Activated CD4-positive, alpha-beta memory T cell treated with anti-CD3 and anti-CD28 coated beads for 36 hours (primary cell): ENCODE measurements at regions of chr17 and their contacts with region 1.

Region 1: GRCh38 chr17:58517734-58518609 is 3.5 kb upstream of the MTMR4 start:
- DNase-seq: peak; percentile 100
- H3K4me3 Mint-ChIP-seq: peak overlapping the region; percentile 91
- H3K27ac Mint-ChIP-seq: peak overlapping the region; percentile 95
- H3K4me1 Mint-ChIP-seq: peaks cover 32% of the 10 kb centered on the region
- H3K27me3 Mint-ChIP-seq: no peaks in the 10 kb centered on the region

Region 2: GRCh38 chr17:58006924-58007780 is 510.8 kb before region 1 on chr17 and contains the start of gene SRSF1:
- CTCF ChIA-PET with region 1: no interaction called
- POLR2A ChIA-PET with region 1: no interaction called
- intact Hi-C with region 1: loop called (anchors 1 kb)
- DNase-seq: peak; percentile 99
- H3K4me3 Mint-ChIP-seq: peak within 1 kb of the TSS; percentile 99
- H3K27ac Mint-ChIP-seq: peak within 1 kb of the TSS; percentile 100
- H3K4me1 Mint-ChIP-seq: peaks cover 46% of the 10 kb centered on the region
- H3K27me3 Mint-ChIP-seq: no peaks in the 10 kb centered on the region
- total RNA-seq, gene SRSF1: 325 to 326 TPM

Region 3: DNA sequence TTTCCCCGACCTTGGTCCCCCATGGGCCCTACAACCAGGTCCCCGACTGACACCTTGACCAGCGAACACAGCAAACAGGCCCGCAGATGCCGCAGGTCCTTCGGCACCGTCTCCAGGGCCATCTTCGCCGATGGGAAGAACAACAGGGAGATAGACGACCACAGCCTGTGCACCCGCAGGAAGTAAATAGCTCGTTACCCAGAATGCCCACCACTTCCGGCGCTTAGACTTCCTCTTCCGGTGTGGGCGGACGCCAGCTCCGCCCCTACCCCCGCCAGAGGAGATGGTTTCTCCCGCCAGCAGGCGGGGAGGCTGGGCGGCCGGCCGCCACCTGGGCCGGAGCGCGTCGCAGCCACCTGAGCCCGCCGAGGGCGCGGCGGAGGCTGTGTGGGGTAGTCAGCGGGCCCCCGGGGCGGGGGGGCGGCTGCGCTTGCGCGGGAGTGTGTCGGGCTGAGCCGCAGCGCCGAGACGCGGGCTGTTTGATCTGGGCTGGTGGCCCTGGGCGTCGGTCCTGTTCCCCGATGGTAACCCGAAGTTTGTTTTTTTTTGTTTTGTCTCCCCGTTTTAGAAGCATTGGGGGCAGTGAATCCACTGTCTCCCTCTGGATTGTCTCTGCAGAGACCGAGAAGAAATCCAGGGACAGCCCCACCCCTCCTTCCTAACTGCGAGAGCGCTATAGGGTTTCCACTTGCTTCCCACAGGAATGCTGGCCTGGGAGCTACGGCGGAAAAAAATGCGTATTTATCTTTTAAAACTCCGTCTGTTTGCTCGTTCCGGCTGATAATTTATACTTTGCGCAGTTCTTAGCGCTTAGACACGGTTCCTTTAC is 165.7 kb before region 1 on chr17 and contains the start of gene SUPT4H1:
- CTCF ChIA-PET with region 1: no interaction called
- POLR2A ChIA-PET with region 1: interaction called, 4 read pairs
- intact Hi-C with region 1: loop called (anchors 2 kb)
- DNase-seq: peak; percentile 96
- H3K4me3 Mint-ChIP-seq: peak within 1 kb of the TSS; percentile 100
- H3K27ac Mint-ChIP-seq: peak within 1 kb of the TSS; percentile 99
- H3K4me1 Mint-ChIP-seq: peaks cover 50% of the 10 kb centered on the region
- H3K27me3 Mint-ChIP-seq: no peaks in the 10 kb centered on the region
- total RNA-seq, gene SUPT4H1: 113 to 114 TPM

Region 4: DNA sequence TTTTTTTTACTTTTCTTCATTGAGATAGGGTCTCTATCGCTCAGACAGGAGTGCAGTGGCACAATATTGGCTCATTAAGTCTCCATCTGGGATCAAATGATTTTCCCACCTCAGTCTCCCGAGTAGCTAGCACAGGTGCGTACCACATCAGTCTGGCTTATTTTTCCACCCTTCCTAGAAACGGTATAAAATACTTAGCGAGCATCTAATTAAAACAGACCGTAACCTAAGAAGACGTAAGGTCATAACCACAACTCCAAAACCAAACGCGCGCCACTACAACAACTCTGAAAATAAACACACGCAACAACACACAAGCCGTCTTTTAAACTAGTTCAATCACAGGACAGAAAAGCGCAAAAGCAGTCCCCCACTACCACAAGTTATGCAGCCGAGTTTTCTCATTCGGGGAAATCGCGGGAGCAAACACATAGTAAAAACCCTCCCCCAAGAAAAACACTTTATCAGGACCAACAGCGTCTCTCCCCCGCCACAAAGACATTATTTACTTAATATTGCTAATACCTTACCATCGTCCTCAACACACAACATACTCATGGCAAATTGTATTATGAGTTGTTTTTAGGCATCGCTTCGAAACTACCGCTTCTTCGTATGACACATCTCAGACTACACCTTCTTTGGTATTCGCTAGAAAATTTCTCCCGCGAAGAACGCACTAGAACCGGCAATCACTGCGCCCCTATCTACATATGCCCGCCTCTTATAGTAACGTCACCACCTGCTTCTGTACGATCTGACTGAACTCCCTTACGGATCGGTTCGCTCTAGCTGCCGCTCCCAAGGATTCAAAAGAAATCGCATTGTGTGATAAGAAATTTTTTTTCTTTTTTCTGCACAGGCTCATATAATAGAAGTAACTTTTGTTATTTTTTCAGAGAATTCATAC is 141.1 kb after region 1 on chr17:
- CTCF ChIA-PET with region 1: interaction called, 4 read pairs
- POLR2A ChIA-PET with region 1: interaction called, 4 read pairs
- intact Hi-C with region 1: loop called (anchors 1 kb)
- DNase-seq: peak; percentile 86
- H3K4me3 Mint-ChIP-seq: peak overlapping the region; percentile 77
- H3K27ac Mint-ChIP-seq: peak overlapping the region; percentile 97
- H3K4me1 Mint-ChIP-seq: peaks cover 18% of the 10 kb centered on the region
- H3K27me3 Mint-ChIP-seq: peaks cover 5% of the 10 kb centered on the region

Region 5: DNA sequence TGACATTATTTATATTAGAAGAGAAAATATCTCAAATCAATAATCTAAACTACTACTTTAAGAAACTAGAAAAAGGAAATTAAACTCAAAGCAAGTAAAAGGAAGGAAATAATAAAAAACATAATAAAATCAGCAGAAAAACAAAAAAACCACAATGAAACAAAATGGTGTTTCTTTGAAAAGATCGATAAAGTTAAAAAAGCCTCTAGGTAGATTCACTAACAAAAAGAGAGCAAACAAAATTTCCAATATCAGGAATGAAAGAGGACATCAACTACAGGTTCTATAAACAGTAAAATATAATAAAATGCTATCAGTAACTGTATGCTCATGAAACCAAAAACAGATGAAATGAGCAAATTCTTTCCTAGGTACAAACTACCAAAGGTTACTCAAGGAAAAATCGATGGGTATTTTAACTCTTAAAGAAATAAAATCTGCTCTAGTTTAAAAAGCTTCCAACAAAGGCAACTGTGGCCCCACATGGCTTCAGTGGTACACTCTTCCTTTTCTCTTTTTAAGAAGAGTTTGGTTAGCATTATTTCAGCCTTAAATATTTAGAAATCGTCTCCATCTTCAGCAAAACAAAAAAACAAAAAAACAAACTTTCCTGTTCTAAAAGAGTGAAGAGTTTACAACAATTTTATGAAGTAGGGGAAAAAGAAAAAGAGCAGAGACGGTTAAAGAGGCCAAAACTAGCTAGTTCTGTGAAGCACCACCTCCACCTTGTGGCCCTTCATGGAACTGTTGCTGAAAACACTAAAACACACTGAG is 486.6 kb after region 1 on chr17:
- CTCF ChIA-PET with region 1: interaction called, 31 read pairs
- POLR2A ChIA-PET with region 1: no interaction called
- intact Hi-C with region 1: loop called (anchors 1 kb)
- DNase-seq: peak; percentile 76
- H3K4me3 Mint-ChIP-seq: no peak overlapping the region
- H3K27ac Mint-ChIP-seq: peak overlapping the region; percentile 13
- H3K4me1 Mint-ChIP-seq: peaks cover 23% of the 10 kb centered on the region
- H3K27me3 Mint-ChIP-seq: no peaks in the 10 kb centered on the region

Region 6: GRCh38 chr17:59155439-59156182 is 637.6 kb after region 1 on chr17 and contains the start of gene PRR11:
- CTCF ChIA-PET with region 1: no interaction called
- POLR2A ChIA-PET with region 1: no interaction called
- intact Hi-C with region 1: loop called (anchors 1 kb)
- DNase-seq: peak; percentile 97
- H3K4me3 Mint-ChIP-seq: no peak within 1 kb of the TSS
- H3K27ac Mint-ChIP-seq: no peak within 1 kb of the TSS
- H3K4me1 Mint-ChIP-seq: peaks cover 37% of the 10 kb centered on the region
- H3K27me3 Mint-ChIP-seq: no peaks in the 10 kb centered on the region
- total RNA-seq, gene PRR11: 67.3 to 70.2 TPM